Activated naive CD4-positive, alpha-beta T cell treated with anti-CD3 and anti-CD28 coated beads for 36 hours (primary cell): ENCODE measurements at regions of chr17 and their contacts with region 1.

Region 1: DNA sequence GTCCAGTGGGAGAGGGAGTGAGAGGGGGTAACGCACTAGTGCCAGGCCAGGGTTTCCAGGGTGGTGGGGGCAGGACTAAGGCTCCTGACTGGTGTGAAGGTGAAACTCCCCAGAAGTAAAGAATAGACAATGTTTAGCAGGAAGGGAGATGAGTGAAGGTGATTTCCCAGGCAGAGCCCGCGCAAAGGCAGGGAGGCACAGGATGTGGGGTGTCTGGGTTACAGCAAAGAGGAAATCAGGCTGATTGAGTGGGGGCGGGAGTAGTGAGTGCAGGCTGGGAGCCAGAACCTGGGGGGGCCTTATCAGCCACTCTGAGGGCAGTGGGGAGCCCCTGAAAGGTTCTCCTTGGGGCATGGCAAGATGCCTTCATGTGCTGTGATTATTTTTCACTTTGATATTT is 167.5 kb downstream of the UTP18 start:
- DNase-seq: peak; percentile 92
- H3K4me3 Mint-ChIP-seq: peak overlapping the region; percentile 48
- H3K27ac Mint-ChIP-seq: peak overlapping the region; percentile 93
- H3K4me1 Mint-ChIP-seq: peaks cover 65% of the 10 kb centered on the region
- H3K27me3 Mint-ChIP-seq: no peaks in the 10 kb centered on the region

Region 2: DNA sequence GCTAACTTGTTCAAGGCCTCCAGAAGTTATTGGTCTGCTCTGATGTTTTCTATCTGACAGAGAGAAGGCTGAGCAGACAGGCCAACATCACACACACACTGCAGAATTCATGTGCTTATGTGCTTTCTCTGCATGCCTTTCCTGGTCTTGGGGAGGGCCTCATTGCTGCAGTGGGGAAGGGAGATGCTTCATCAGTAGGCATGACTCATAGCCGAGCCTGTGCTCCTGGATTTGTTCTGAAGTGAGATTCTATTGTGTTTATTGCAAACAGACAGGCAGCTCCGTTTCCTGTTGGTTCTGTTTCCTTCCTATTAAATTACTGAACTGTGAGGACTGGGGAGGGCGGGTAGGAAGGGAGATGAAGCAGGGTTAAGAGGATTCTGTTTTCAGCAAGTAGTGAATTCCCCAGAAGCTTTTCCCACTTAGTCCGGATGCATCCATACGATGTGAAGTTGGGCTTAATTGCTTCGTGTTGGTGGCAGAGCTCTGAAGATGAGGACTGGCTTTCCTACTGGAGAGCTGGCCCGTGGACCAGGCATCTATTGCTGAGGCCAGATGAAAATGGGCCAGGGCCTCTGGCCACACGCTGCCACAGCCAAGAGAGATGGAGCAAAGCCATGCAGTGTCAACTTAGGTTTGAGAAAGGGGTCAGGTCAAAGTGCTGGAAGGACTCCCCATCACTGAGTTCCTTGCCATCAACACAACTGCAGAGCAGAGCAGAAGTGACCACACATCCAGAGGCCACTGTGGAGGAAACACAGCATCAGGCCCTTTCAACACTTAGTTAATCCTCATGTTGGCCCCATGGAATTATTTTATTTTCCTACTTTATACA is 11.8 kb after region 1 on chr17:
- CTCF ChIA-PET with region 1: interaction called, 3 read pairs
- intact Hi-C with region 1: loop called (anchors 1 kb)
- DNase-seq: peak; percentile 67
- H3K4me3 Mint-ChIP-seq: no peak overlapping the region
- H3K27ac Mint-ChIP-seq: peak overlapping the region; percentile 14
- H3K4me1 Mint-ChIP-seq: peaks cover 33% of the 10 kb centered on the region
- H3K27me3 Mint-ChIP-seq: no peaks in the 10 kb centered on the region